Ascending aorta (tissue), 2 donors: ENCODE measurements at regions of chr7 and their contacts with region 1.

Region 1: GRCh38 chr7:98280791-98281756 is at the start of gene BRI3:
- DNase-seq: peak; percentile 55 to 96
- H3K4me3 ChIP-seq: peak within 1 kb of the TSS; percentile 93 to 100
- H3K27ac ChIP-seq: peak within 1 kb of the TSS; percentile 99
- H3K4me1 ChIP-seq: peaks cover 25 to 33% of the 10 kb centered on the region in 2 donors
- H3K27me3 ChIP-seq: no peaks in the 10 kb centered on the region
- CTCF ChIP-seq: no peak
- total RNA-seq, gene BRI3: 61.6 TPM

Region 2: GRCh38 chr7:96962221-96962885 is 1318.7 kb before region 1 on chr7:
- intact Hi-C with region 1: no loop called
- DNase-seq: no peak
- H3K4me3 ChIP-seq: no peak overlapping the region
- H3K27ac ChIP-seq: no peak overlapping the region
- H3K4me1 ChIP-seq: no peaks in the 10 kb centered on the region
- H3K27me3 ChIP-seq: no peaks in the 10 kb centered on the region
- CTCF ChIP-seq: no peak

Region 3: DNA sequence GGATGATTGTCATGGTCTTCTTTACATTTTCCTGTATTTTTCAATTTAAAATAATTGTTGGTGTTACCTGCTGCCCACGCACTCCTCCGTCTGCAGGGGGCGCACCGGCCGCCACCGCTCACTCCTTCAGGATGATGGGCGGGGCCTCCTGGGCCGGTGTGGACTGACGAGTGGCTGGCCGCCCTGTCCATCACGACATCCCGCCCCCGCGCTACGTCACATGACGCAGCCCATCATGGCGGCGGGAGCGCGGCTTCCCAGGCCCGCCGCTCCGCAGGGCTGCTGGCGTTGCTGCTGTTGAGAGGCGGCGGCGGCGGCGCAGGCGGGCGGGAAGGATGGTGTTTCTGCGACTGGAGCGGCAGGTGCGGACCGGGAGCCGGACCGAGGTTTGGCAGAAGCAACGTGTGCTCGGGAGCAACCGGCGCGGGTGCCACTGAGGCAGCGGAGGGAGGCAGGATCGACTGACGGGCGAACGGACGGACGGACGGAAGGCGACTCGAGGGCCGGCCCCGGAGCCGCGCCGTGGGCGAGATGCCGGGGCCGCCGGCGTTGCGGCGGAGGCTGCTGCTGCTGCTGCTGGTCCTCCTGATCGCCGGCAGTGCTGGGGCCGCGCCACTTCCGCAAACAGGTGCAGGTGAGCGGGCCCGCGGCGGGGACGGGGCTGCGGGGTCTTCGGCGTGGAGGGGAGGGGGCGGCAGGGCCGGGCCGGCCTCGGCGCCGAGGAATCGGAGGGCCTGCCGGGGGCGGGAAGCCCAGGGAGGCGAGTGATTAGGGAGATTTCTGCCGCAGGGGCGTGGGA is 174.2 kb before region 1 on chr7 and contains the start of gene LMTK2:
- intact Hi-C with region 1: loop called (anchors 2 kb)
- DNase-seq: peak; percentile 78 to 98
- H3K4me3 ChIP-seq: peak within 1 kb of the TSS; percentile 86 to 97
- H3K27ac ChIP-seq: peak within 1 kb of the TSS; percentile 67 to 78
- H3K4me1 ChIP-seq: peaks cover 0 to 7% of the 10 kb centered on the region in 2 donors
- H3K27me3 ChIP-seq: no peaks in the 10 kb centered on the region
- CTCF ChIP-seq: peak; percentile 77 to 92 (median 81)
- total RNA-seq, gene LMTK2: 11.8 TPM

Region 4: GRCh38 chr7:98251841-98252639 is 29.0 kb before region 1 on chr7 and contains the start of gene TECPR1:
- intact Hi-C with region 1: loop called (anchors 1 kb)
- DNase-seq: peak; percentile 77 to 96
- H3K4me3 ChIP-seq: peak within 1 kb of the TSS; percentile 80 to 90
- H3K27ac ChIP-seq: peak within 1 kb of the TSS; percentile 65 to 81
- H3K4me1 ChIP-seq: peaks cover 6 to 18% of the 10 kb centered on the region in 2 donors
- H3K27me3 ChIP-seq: no peaks in the 10 kb centered on the region
- CTCF ChIP-seq: no peak
- total RNA-seq, gene TECPR1: 28.1 TPM

Region 5: GRCh38 chr7:98315341-98315983 is 34.4 kb after region 1 on chr7:
- intact Hi-C with region 1: no loop called
- DNase-seq: no peak
- H3K4me3 ChIP-seq: no peak overlapping the region
- H3K27ac ChIP-seq: no peak overlapping the region
- H3K4me1 ChIP-seq: no peaks in the 10 kb centered on the region
- H3K27me3 ChIP-seq: no peaks in the 10 kb centered on the region
- CTCF ChIP-seq: no peak

Region 6: DNA sequence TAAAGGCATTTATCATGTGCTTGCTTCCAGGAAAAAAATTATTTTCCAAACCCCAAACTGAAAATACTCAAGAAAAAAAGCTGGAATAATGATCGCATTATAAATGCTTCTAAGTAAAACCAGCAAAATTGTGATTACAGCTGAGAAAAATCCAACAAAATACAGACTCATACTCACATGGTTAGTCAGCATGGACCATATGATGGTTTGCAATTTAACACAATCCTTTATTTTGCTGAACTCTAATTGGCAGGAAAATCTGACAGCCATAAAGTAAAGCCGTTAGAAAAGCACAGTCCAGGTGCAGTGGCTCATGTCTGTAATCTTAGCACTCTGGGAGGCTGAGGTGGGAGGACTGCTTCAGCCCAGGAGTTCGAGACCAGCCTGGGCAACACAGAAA is 60.0 kb after region 1 on chr7:
- intact Hi-C with region 1: no loop called
- DNase-seq: no peak
- H3K4me3 ChIP-seq: no peak overlapping the region
- H3K27ac ChIP-seq: no peak overlapping the region
- H3K4me1 ChIP-seq: no peaks in the 10 kb centered on the region
- H3K27me3 ChIP-seq: no peaks in the 10 kb centered on the region
- CTCF ChIP-seq: no peak

Region 7: DNA sequence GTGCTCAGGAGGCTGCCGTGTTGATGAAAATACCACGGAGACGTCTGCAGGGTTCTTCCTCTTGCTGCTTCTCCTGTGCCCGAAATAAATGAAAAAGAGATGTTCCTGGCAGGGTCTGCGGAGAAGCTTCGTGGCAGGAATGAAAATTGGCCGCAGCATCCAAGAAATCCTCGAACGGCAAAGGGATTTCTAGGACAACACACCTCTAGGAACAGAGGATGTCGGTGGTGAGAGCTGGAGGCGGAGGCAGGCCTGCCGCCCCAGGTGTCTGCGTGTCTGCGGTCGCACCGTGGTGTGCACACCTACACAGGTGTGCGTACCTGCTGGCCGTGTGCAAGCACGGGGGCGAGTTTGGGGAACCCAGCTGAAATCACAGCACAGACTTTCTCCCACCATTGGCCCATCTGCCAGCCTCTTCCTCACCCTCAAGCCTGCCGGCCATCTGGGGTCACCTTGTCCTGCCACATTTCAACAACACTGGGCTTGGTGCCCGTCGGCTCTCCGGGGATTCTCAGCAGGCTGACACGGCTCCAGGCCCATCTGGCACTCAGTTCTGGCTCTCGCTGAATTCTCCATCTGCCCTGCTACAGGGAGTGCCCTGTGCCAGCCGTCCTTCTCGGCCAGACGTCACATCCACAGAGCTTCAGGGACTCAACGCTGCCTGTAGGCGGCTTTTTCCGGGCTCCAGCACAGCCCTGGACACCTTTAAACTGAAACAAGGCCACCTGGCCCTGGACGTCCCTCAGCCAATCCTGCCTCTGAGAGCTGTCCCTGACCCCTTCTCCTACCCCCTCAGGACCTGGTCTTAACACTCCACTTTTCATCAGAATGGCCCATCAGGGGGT is 545.5 kb after region 1 on chr7:
- intact Hi-C with region 1: loop called (anchors 5 kb)
- DNase-seq: peak; percentile 65 to 96
- H3K4me3 ChIP-seq: peak overlapping the region in 1 of 2 donors; percentile 10
- H3K27ac ChIP-seq: peak overlapping the region; percentile 81
- H3K4me1 ChIP-seq: peaks cover 4 to 14% of the 10 kb centered on the region in 2 donors
- H3K27me3 ChIP-seq: no peaks in the 10 kb centered on the region
- CTCF ChIP-seq: peak; percentile 37 to 56 (median 42)

Region 8: GRCh38 chr7:99504603-99505323 is 1223.7 kb after region 1 on chr7 and contains the start of gene ZKSCAN5:
- intact Hi-C with region 1: loop called (anchors 10 kb)
- DNase-seq: peak; percentile 91 to 99
- H3K4me3 ChIP-seq: peak within 1 kb of the TSS; percentile 75 to 94
- H3K27ac ChIP-seq: peak within 1 kb of the TSS; percentile 83 to 97
- H3K4me1 ChIP-seq: peaks cover 9 to 27% of the 10 kb centered on the region in 2 donors
- H3K27me3 ChIP-seq: no peaks in the 10 kb centered on the region
- CTCF ChIP-seq: no peak
- total RNA-seq, gene ZKSCAN5: 4.4 TPM